CD4-positive, alpha-beta memory T cell (primary cell): ENCODE measurements at regions of chr3 and their contacts with region 1.

Region 1: GRCh38 chr3:114056130-114057010 is at the starts of genes CCDC191 and QTRT2:
- DNase-seq: peak; percentile 97 to 99 (median 98)
- H3K4me3 ChIP-seq: peak within 1 kb of the TSS; percentile 78 to 93
- H3K4me3 Mint-ChIP-seq: peak within 1 kb of the TSS; percentile 95 to 100 (median 99)
- H3K27ac ChIP-seq: peak within 1 kb of the TSS; percentile 86
- H3K27ac Mint-ChIP-seq: peak within 1 kb of the TSS; percentile 93 to 100 (median 99)
- H3K4me1 ChIP-seq: peaks cover 26% of the 10 kb centered on the region
- H3K4me1 Mint-ChIP-seq: peaks cover 21 to 57% (median 38%) of the 10 kb centered on the region in 4 donors
- H3K27me3 ChIP-seq: no peaks in the 10 kb centered on the region
- H3K27me3 Mint-ChIP-seq: peaks cover 0 to 2% of the 10 kb centered on the region in 2 donors
- total RNA-seq, gene CCDC191: 5.7 to 7.1 TPM
- total RNA-seq, gene QTRT2: 29.4 to 35.7 TPM

Region 2: DNA sequence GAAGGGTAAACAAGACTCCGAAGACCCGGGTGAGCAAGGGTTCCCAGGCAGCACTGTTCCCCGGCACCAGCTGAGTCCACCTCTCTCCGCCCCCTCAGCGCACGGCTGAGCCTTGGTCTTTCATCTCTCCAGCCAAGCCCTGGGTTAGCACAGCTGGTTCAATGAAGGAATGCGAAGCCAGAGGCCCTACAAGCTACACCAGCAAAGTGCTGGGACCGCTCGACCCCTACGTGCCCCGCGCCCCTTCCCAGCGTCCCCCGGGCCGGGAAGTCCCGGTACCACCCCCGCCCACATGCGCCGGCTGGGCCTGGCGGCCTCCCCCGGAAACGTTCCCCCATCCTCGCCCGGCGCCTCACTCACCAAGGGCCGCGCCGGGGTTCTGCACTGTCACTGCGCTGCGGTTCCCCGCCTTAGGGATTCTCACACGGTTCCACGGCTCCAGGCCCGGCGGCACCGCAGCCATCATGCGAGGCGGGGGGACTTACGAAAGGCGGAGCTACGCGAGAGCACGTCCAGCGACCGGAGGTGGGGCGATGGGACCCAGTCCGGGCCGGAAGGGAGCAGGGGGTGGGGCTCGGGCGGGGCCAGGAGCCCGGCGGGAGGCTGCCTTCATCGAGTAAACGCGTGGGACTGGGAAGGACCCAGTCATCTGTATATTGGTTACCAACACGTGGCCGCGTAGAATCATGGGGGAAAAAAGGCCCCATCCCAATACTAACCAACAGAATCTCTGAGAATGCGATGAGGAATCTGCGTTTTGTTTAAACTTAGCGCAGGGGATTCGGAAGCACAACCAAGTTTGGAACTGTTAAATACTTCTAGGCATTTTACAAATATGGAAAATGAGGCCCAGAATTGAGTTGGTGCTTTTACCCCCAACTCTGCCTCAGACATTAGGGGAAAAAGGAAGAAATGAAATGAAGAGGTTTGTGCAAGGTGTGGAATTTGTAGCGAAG is 1036.9 kb before region 1 on chr3:
- CTCF ChIA-PET with region 1: no interaction called
- POLR2A ChIA-PET with region 1: no interaction called
- intact Hi-C with region 1: loop called (anchors 10 kb)
- DNase-seq: peak; percentile 76 to 89 (median 81)
- H3K4me3 ChIP-seq: peak overlapping the region; percentile 59 to 89
- H3K4me3 Mint-ChIP-seq: peak overlapping the region; percentile 92 to 97 (median 96)
- H3K27ac ChIP-seq: peak overlapping the region; percentile 89
- H3K27ac Mint-ChIP-seq: peak overlapping the region; percentile 91 to 98 (median 95)
- H3K4me1 ChIP-seq: peaks cover 45% of the 10 kb centered on the region
- H3K4me1 Mint-ChIP-seq: peaks cover 42 to 76% (median 61%) of the 10 kb centered on the region in 4 donors
- H3K27me3 ChIP-seq: no peaks in the 10 kb centered on the region
- H3K27me3 Mint-ChIP-seq: no peaks in the 10 kb centered on the region

Region 3: DNA sequence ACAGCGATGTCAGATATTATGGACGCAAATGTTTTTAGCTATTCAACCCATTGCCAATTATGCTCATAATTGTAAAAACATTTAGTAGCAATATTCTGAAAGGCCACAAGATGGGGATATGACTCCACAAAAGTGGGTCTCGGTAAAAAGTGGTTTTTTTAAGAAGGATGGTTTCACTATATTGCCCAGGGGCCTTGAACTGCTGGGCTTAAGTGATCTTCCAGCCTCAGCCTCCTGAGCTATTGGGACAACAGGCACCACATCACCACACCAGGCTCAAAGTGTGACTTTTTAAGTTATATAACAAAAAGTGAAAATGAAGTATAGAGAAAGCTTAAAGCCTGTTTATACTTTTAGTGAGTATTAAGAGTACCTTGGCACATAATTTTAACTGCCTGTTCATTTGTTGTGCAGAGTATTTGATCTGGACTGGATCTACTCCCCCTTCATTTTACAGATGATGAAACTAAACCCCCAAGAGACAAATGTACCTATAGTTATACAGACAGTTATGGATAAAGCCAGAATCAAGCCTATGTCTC is 319.8 kb before region 1 on chr3:
- CTCF ChIA-PET with region 1: interaction called, 3 read pairs
- POLR2A ChIA-PET with region 1: no interaction called
- intact Hi-C with region 1: loop called (anchors 2 kb)
- DNase-seq: peak; percentile 47 to 72 (median 71)
- H3K4me3 ChIP-seq: no peak overlapping the region
- H3K4me3 Mint-ChIP-seq: peak overlapping the region in 1 of 8 donors; percentile 15
- H3K27ac ChIP-seq: peak overlapping the region; percentile 32
- H3K27ac Mint-ChIP-seq: peak overlapping the region; percentile 48 to 88 (median 77)
- H3K4me1 ChIP-seq: peaks cover 32% of the 10 kb centered on the region
- H3K4me1 Mint-ChIP-seq: peaks cover 35 to 61% (median 42%) of the 10 kb centered on the region in 4 donors
- H3K27me3 ChIP-seq: no peaks in the 10 kb centered on the region
- H3K27me3 Mint-ChIP-seq: no peaks in the 10 kb centered on the region

Region 4: DNA sequence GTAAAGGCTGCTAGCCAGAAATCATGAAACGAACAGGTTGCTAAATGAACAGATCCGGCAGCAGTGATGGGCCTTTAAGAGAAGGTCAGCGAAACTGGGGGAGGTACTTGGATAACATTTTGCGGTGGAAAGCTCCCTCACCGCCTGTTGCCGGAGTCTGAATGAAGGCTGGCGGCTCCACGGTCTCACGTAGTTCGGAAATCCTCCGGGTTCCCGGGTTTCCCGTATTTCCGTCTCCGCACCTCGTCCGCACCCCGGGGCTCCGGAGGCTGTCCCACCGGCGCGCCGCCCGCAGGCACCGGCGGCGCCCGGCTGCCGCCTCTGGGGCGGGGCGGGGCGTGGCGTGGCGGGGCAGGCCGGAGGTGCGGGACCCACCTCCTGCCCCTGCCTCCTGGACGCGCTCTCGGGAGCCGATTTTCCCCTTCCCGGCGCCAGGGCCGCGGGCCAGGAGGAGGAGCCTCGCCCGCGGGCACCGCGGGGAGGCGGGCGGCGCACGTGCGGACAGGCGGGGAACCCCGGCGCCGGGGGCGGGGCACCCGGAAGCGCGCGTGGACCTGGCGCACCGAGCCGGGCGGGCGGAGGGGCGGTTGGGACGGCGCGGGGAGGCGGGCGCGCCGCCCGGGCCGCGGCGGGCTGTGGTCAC is 108.9 kb before region 1 on chr3 and contains the start of gene ZDHHC23:
- CTCF ChIA-PET with region 1: no interaction called
- POLR2A ChIA-PET with region 1: no interaction called
- intact Hi-C with region 1: loop called (anchors 1 kb)
- DNase-seq: peak; percentile 71 to 79 (median 75)
- H3K4me3 ChIP-seq: peak within 1 kb of the TSS; percentile 57 to 66
- H3K4me3 Mint-ChIP-seq: peak within 1 kb of the TSS; percentile 86 to 90 (median 87)
- H3K27ac ChIP-seq: peak within 1 kb of the TSS; percentile 19
- H3K27ac Mint-ChIP-seq: peak within 1 kb of the TSS; percentile 78 to 87 (median 82)
- H3K4me1 ChIP-seq: peaks cover 14% of the 10 kb centered on the region
- H3K4me1 Mint-ChIP-seq: peaks cover 8 to 23% (median 11%) of the 10 kb centered on the region in 4 donors
- H3K27me3 ChIP-seq: no peaks in the 10 kb centered on the region
- H3K27me3 Mint-ChIP-seq: peaks cover 3 to 5% of the 10 kb centered on the region in 2 donors
- total RNA-seq, gene ZDHHC23: 5.2 to 7.3 TPM

Region 5: GRCh38 chr3:115092220-115092791 is 1035.9 kb after region 1 on chr3:
- CTCF ChIA-PET with region 1: no interaction called
- POLR2A ChIA-PET with region 1: no interaction called
- intact Hi-C with region 1: loop called (anchors 5 kb)
- DNase-seq: peak; percentile 43 to 62 (median 48)
- H3K4me3 ChIP-seq: no peak overlapping the region
- H3K4me3 Mint-ChIP-seq: no peak overlapping the region
- H3K27ac ChIP-seq: no peak overlapping the region
- H3K27ac Mint-ChIP-seq: no peak overlapping the region
- H3K4me1 ChIP-seq: peaks cover 4% of the 10 kb centered on the region
- H3K4me1 Mint-ChIP-seq: peaks cover 12 to 20% (median 16%) of the 10 kb centered on the region in 4 donors
- H3K27me3 ChIP-seq: no peaks in the 10 kb centered on the region
- H3K27me3 Mint-ChIP-seq: no peaks in the 10 kb centered on the region